Heart left ventricle (tissue), 16 donors: ENCODE measurements at regions of chr20 and their contacts with region 1.

Region 1: DNA sequence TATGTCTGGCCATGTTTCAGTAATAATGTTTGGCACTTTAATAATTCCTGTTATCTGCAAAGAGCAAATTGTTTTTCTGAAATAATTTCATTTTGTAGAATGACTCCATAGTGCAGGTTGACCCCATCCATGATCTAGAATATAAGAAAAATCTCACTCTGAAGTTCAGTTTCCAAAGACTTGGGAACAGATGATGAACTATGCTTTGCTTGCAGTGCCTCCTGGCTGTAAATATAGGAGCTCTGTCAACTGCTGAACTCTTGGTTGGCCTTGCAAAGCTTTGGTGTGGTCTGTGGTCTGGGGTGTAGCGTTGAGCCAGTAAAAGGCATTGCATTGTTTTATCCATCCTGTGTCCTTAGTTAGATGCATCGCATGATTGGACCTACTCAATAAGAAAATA is 104.0 kb downstream of the PLCB4 start:
- DNase-seq: no peak
- ATAC-seq: peak in 3 of 4 donors; percentile 55 to 65 (median 64)
- H3K4me3 ChIP-seq: no peak overlapping the region
- H3K27ac ChIP-seq: peak overlapping the region in 1 of 12 donors; percentile 13
- H3K4me1 ChIP-seq: peaks cover 0 to 34% (median 20%) of the 10 kb centered on the region in 12 donors
- H3K27me3 ChIP-seq: no peaks in the 10 kb centered on the region
- CTCF ChIP-seq: peak in 11 of 12 donors; percentile 20 to 66 (median 44)
- POLR2A ChIP-seq: no peak

Region 2: GRCh38 chr20:8790442-8791074 is 382.3 kb before region 1 on chr20:
- intact Hi-C with region 1: loop called in 2 of 10 experiments (anchors 10 kb)
- DNase-seq: peak in 3 of 5 donors; percentile 19 to 38 (median 37)
- ATAC-seq: peak in 1 of 4 donors; percentile 50
- H3K4me3 ChIP-seq: no peak overlapping the region
- H3K27ac ChIP-seq: no peak overlapping the region
- H3K4me1 ChIP-seq: peaks cover 0 to 8% (median 0%) of the 10 kb centered on the region in 12 donors
- H3K27me3 ChIP-seq: no peaks in the 10 kb centered on the region
- CTCF ChIP-seq: peak; percentile 86 to 100 (median 94)
- POLR2A ChIP-seq: no peak

Region 3: GRCh38 chr20:9099372-9099771 is 73.5 kb before region 1 on chr20:
- intact Hi-C with region 1: loop called in 1 of 10 experiments (anchors 5 kb)
- DNase-seq: no peak
- ATAC-seq: peak in 1 of 4 donors; percentile 33
- H3K4me3 ChIP-seq: no peak overlapping the region
- H3K27ac ChIP-seq: no peak overlapping the region
- H3K4me1 ChIP-seq: peaks cover 0 to 21% (median 7%) of the 10 kb centered on the region in 12 donors
- H3K27me3 ChIP-seq: no peaks in the 10 kb centered on the region
- CTCF ChIP-seq: peak in 7 of 12 donors; percentile 7 to 34 (median 17)
- POLR2A ChIP-seq: no peak

Region 4: GRCh38 chr20:9294053-9294452 is 121.2 kb after region 1 on chr20:
- intact Hi-C with region 1: no loop called
- DNase-seq: no peak
- ATAC-seq: no peak
- H3K4me3 ChIP-seq: no peak overlapping the region
- H3K27ac ChIP-seq: no peak overlapping the region
- H3K4me1 ChIP-seq: peaks cover 0 to 23% (median 5%) of the 10 kb centered on the region in 12 donors
- H3K27me3 ChIP-seq: no peaks in the 10 kb centered on the region
- CTCF ChIP-seq: no peak
- POLR2A ChIP-seq: no peak